GM23248 (cell line): ENCODE measurements at regions of chr16 and their contacts with region 1.

Region 1: DNA sequence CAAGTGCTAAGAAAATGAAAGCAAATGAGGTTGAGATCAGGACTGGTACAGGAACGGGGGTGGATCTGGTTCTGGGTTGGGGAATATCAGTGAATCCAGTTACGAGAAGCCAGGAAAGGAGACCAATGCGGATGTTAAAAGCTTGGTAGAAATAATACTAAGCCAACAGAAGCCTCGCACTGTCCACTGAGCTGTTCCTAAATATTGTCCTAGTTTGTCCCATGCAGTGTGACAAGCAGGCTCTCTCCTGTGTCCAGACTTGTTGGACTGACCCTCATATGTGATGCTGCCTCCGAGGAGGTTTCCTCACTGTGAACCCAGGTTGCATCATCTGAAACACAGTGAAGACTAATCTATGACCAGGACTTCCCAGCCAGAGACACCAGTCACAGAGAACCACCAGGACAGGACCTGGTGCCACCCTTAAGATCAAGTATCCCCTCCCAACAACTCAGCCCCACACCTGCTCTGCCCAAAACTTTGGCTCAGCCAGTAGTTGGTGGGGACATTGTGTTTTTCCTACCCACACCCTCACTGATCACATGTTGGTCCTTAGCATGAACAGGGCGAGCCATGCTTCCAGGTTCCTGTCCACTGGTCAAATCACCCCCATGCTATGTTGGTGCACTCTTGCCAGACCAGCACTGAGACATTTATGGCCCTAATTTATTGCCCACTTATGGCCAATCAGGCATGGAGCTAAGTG is 32.7 kb upstream of the SCNN1B start:
- DNase-seq: no peak
- H3K4me3 ChIP-seq: no peak overlapping the region
- H3K27ac ChIP-seq: no peak overlapping the region
- H3K4me1 ChIP-seq: no peaks in the 10 kb centered on the region
- H3K27me3 ChIP-seq: no peaks in the 10 kb centered on the region

Region 2: GRCh38 chr16:22804893-22805292 is 464.5 kb before region 1 on chr16:
- in situ Hi-C with region 1: no loop called
- DNase-seq: no peak
- H3K4me3 ChIP-seq: no peak overlapping the region
- H3K27ac ChIP-seq: no peak overlapping the region
- H3K4me1 ChIP-seq: no peaks in the 10 kb centered on the region
- H3K27me3 ChIP-seq: no peaks in the 10 kb centered on the region

Region 3: DNA sequence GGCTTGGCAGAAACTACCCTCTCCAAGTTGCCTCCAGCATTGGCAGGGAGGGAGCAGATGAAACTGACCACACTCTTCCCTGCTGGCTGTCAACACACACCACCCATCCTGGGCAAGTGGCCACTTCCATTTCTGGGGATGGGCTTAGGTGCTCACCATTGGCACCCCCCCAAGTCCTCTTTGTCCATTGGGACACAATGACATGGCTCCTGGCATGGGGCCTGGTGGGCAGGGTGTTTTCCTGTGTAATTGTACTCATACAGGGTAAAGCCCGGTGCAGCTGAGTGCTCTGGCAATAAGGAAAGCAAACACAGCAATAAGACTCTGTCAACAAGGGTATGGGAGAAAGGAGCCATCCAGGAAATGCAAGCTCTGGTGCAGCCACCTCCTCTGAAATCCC is 55.3 kb after region 1 on chr16:
- in situ Hi-C with region 1: loop called (anchors 10 kb)
- DNase-seq: no peak
- H3K4me3 ChIP-seq: no peak overlapping the region
- H3K27ac ChIP-seq: no peak overlapping the region
- H3K4me1 ChIP-seq: no peaks in the 10 kb centered on the region
- H3K27me3 ChIP-seq: no peaks in the 10 kb centered on the region; the same call in 1 of the 2 replicates